Activated T-helper 1 cell treated with anti-CD3 and anti-CD28 coated beads, Interleukin-12 subunit alpha, Interleukin-12 subunit beta, Interleukin-2, Interleukin-4 antibody, amounts not matched to agents 30 ng/mL and 10 ng/mL and 1 ng/mL, durations not matched to agents 14 hours and 24 hours and 36 hours (primary cell): ENCODE measurements at regions of chr4 and their contacts with region 1.

Region 1: GRCh38 chr4:99949034-99949998 is 759 bp downstream of the H2AZ1 start:
- DNase-seq: peak; percentile 82
- H3K4me3 Mint-ChIP-seq: no peak overlapping the region
- H3K27ac Mint-ChIP-seq: no peak overlapping the region
- H3K4me1 Mint-ChIP-seq: peaks cover 30% of the 10 kb centered on the region
- H3K27me3 Mint-ChIP-seq: no peaks in the 10 kb centered on the region

Region 2: GRCh38 chr4:98260579-98261290 is 1688.6 kb before region 1 on chr4:
- intact Hi-C with region 1: loop called (anchors 10 kb)
- DNase-seq: peak; percentile 89
- H3K4me3 Mint-ChIP-seq: peak overlapping the region; percentile 96
- H3K27ac Mint-ChIP-seq: peak overlapping the region; percentile 97
- H3K4me1 Mint-ChIP-seq: peaks cover 55% of the 10 kb centered on the region
- H3K27me3 Mint-ChIP-seq: no peaks in the 10 kb centered on the region

Region 3: GRCh38 chr4:99507762-99508161 is 441.6 kb before region 1 on chr4:
- intact Hi-C with region 1: loop called (anchors 2 kb)
- DNase-seq: peak; percentile 50
- H3K4me3 Mint-ChIP-seq: peak overlapping the region; percentile 12
- H3K27ac Mint-ChIP-seq: peak overlapping the region; percentile 87
- H3K4me1 Mint-ChIP-seq: peaks cover 36% of the 10 kb centered on the region
- H3K27me3 Mint-ChIP-seq: peaks cover 2% of the 10 kb centered on the region

Region 4: DNA sequence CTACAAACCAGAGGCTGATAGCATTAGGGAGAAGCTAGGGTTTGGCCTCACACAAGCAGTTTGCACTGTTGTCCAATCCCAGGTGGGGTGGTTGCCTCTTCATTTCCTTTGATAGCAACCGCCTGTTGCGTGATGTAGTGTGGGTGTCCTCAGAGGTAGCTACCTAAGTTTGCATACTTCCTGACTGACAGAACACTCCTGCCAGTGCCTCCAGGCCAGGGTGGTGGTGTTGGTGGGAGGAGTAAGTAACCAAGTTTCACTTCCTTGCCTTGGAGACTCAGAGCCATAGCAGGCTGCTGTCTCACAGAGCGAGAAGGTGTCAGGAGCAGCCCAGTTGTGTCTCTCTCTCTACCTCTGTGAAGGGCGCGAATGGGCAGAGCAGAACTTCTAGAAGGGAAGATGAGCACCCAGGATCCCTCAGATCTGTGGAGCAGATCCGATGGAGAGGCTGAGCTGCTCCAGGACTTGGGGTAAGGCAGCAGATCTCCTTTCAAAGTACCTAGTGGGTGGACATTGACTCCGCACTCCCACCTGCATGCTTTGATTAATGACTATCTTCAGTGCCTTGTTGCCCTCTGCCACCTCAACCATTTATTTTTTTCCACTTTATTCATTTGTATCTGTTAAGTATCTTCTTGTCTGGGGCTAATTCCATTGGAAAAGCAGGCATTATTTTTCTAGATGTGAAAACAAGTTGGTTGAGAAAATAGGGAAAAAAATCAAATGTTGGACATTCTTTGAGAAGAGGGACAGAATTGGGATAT is 132.6 kb before region 1 on chr4 and contains the start of gene DAPP1:
- intact Hi-C with region 1: loop called (anchors 1 kb)
- DNase-seq: peak; percentile 79
- H3K4me3 Mint-ChIP-seq: peak within 1 kb of the TSS; percentile 92
- H3K27ac Mint-ChIP-seq: peak within 1 kb of the TSS; percentile 77
- H3K4me1 Mint-ChIP-seq: peaks cover 76% of the 10 kb centered on the region
- H3K27me3 Mint-ChIP-seq: no peaks in the 10 kb centered on the region
- total RNA-seq, gene DAPP1: 38.8 and 40.2 TPM in 2 replicates

Region 5: GRCh38 chr4:99885063-99885664 is 64.2 kb before region 1 on chr4:
- intact Hi-C with region 1: loop called (anchors 2 kb)
- DNase-seq: no peak
- H3K4me3 Mint-ChIP-seq: no peak overlapping the region
- H3K27ac Mint-ChIP-seq: no peak overlapping the region
- H3K4me1 Mint-ChIP-seq: peaks cover 4% of the 10 kb centered on the region
- H3K27me3 Mint-ChIP-seq: no peaks in the 10 kb centered on the region

Region 6: GRCh38 chr4:100257567-100257966 is 308.3 kb after region 1 on chr4:
- intact Hi-C with region 1: no loop called
- DNase-seq: no peak
- H3K4me3 Mint-ChIP-seq: no peak overlapping the region
- H3K27ac Mint-ChIP-seq: no peak overlapping the region
- H3K4me1 Mint-ChIP-seq: no peaks in the 10 kb centered on the region
- H3K27me3 Mint-ChIP-seq: peaks cover 1% of the 10 kb centered on the region

Region 7: GRCh38 chr4:101020956-101021355 is 1071.6 kb after region 1 on chr4:
- intact Hi-C with region 1: loop called (anchors 5 kb)
- DNase-seq: peak; percentile 16
- H3K4me3 Mint-ChIP-seq: peak overlapping the region; percentile 43
- H3K27ac Mint-ChIP-seq: peak overlapping the region; percentile 67
- H3K4me1 Mint-ChIP-seq: peaks cover 62% of the 10 kb centered on the region
- H3K27me3 Mint-ChIP-seq: no peaks in the 10 kb centered on the region